B cell (primary cell): ENCODE measurements at regions of chr7 and their contacts with region 1.

Region 1: DNA sequence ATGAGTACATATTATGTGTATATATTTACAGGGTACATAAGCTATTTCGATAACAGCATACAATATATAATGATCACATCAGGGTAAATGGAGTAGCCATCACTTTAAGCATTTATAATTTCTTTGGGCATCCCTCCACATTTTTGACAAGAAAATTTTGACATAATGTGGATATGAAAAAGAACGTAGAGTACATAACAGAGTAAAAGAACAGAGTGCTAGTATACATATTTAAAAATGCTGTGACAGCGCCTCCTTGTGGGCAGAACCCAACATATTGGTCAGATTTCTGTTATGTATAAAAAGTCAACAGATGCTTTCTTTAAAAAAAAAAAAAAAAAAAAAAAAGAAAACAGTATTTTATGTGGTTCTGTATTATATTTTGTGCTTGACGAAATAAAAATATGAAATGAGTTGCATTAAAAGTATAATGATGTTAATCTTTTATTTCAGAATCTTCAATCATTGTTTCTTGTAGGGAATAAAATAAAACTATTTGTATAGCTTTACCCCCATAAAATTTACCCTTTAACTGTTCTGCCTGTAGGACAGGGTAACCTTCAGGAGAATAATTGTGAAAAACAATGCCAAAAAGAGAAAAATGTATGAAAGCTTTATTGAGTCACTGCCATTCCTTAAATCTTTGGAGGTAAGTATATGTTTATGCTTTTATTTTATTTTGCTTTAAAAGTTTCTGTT is 18.3 kb upstream of the HBP1 start:
- DNase-seq: peak; percentile 83
- ATAC-seq: peak; percentile 79
- H3K4me3 ChIP-seq: no peak overlapping the region
- H3K4me3 Mint-ChIP-seq: no peak overlapping the region
- H3K27ac ChIP-seq: no peak overlapping the region
- H3K27ac Mint-ChIP-seq: no peak overlapping the region
- H3K4me1 ChIP-seq: no peaks in the 10 kb centered on the region
- H3K4me1 Mint-ChIP-seq: peaks cover 4% of the 10 kb centered on the region
- H3K27me3 ChIP-seq: no peaks in the 10 kb centered on the region
- H3K27me3 Mint-ChIP-seq: no peaks in the 10 kb centered on the region
- CTCF ChIP-seq: peak; percentile 86

Region 2: GRCh38 chr7:106542550-106543220 is 607.8 kb before region 1 on chr7:
- CTCF ChIA-PET with region 1: interaction called, 4 read pairs
- POLR2A ChIA-PET with region 1: no interaction called
- intact Hi-C with region 1: loop called (anchors 1 kb)
- DNase-seq: peak; percentile 71
- ATAC-seq: peak; percentile 84
- H3K4me3 ChIP-seq: no peak overlapping the region
- H3K4me3 Mint-ChIP-seq: no peak overlapping the region
- H3K27ac ChIP-seq: no peak overlapping the region
- H3K27ac Mint-ChIP-seq: no peak overlapping the region
- H3K4me1 ChIP-seq: peaks cover 0 to 3% of the 10 kb centered on the region in 2 donors
- H3K4me1 Mint-ChIP-seq: peaks cover 4% of the 10 kb centered on the region
- H3K27me3 ChIP-seq: no peaks in the 10 kb centered on the region
- H3K27me3 Mint-ChIP-seq: peaks cover 3% of the 10 kb centered on the region
- CTCF ChIP-seq: peak; percentile 78

Region 3: DNA sequence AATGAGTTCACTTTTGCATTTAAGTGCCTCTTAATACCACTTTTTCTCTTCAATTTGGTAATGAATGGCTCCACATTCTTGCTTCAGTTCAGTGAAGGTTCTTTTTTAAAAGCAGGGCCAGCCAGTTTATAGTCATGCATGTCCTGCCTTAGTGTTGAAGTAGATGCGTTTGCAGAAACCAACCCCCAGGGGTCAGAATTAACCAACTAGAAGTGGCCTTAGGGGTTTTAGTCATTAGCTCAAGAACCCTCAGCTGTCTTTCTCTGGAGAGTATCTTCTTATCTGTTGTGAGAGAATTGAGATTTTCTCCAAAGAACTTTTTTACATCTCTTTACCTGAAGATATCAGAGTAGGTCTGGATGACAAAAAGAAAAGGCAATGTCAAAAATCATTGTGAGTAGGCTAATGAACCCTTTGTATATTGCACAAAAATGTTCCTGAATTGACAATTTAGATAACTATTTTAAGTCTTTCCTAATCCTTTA is 203.2 kb before region 1 on chr7:
- CTCF ChIA-PET with region 1: interaction called, 76 read pairs
- POLR2A ChIA-PET with region 1: no interaction called
- intact Hi-C with region 1: loop called (anchors 1 kb)
- DNase-seq: peak; percentile 49
- ATAC-seq: peak; percentile 57
- H3K4me3 ChIP-seq: no peak overlapping the region
- H3K4me3 Mint-ChIP-seq: no peak overlapping the region
- H3K27ac ChIP-seq: no peak overlapping the region
- H3K27ac Mint-ChIP-seq: no peak overlapping the region
- H3K4me1 ChIP-seq: no peaks in the 10 kb centered on the region
- H3K4me1 Mint-ChIP-seq: no peaks in the 10 kb centered on the region
- H3K27me3 ChIP-seq: no peaks in the 10 kb centered on the region
- H3K27me3 Mint-ChIP-seq: peaks cover 4% of the 10 kb centered on the region
- CTCF ChIP-seq: peak; percentile 56

Region 4: GRCh38 chr7:107130487-107131225 is 19.9 kb before region 1 on chr7:
- CTCF ChIA-PET with region 1: interaction called, 51 read pairs
- POLR2A ChIA-PET with region 1: interaction called, 3 read pairs
- intact Hi-C with region 1: no loop called
- DNase-seq: no peak
- ATAC-seq: no peak
- H3K4me3 ChIP-seq: no peak overlapping the region
- H3K4me3 Mint-ChIP-seq: no peak overlapping the region
- H3K27ac ChIP-seq: no peak overlapping the region
- H3K27ac Mint-ChIP-seq: no peak overlapping the region
- H3K4me1 ChIP-seq: peaks cover 9 to 15% of the 10 kb centered on the region in 2 donors
- H3K4me1 Mint-ChIP-seq: peaks cover 9% of the 10 kb centered on the region
- H3K27me3 ChIP-seq: no peaks in the 10 kb centered on the region
- H3K27me3 Mint-ChIP-seq: no peaks in the 10 kb centered on the region
- CTCF ChIP-seq: no peak

Region 5: GRCh38 chr7:107879400-107880035 is 729.0 kb after region 1 on chr7:
- CTCF ChIA-PET with region 1: interaction called, 6 read pairs
- POLR2A ChIA-PET with region 1: no interaction called
- intact Hi-C with region 1: loop called (anchors 1 kb)
- DNase-seq: peak; percentile 52
- ATAC-seq: peak; percentile 58
- H3K4me3 ChIP-seq: no peak overlapping the region
- H3K4me3 Mint-ChIP-seq: no peak overlapping the region
- H3K27ac ChIP-seq: no peak overlapping the region
- H3K27ac Mint-ChIP-seq: no peak overlapping the region
- H3K4me1 ChIP-seq: no peaks in the 10 kb centered on the region
- H3K4me1 Mint-ChIP-seq: peaks cover 3% of the 10 kb centered on the region
- H3K27me3 ChIP-seq: peaks cover 0 to 14% (median 3%) of the 10 kb centered on the region in 4 experiments
- H3K27me3 Mint-ChIP-seq: peaks cover 42% of the 10 kb centered on the region
- CTCF ChIP-seq: peak; percentile 87